Heart left ventricle (tissue), 16 donors: ENCODE measurements at regions of chr6 and their contacts with region 1.

Region 1: DNA sequence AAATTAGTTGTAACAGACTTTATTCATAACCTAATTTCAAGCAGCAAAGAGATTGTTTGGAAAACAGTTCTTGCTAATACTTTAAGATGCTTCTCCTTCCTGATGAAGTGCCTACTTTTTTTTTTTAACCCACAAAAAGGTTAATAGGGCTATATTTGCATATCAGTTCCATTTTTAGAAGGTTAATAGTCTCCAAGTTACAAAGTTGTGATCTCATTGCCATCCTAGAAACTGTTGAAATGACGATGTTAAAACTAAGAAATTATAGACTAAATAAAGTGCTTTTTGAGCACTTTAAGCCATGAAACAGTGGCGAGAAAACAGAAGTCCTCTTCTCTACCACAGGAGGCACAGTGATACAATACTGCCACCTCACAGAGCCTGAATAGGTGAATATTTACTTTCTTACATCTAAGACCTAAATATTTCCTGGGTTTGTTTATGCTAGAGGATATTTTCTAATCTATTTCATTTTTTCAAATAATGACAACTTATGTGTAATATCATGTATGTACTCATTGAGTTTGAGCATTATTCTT is 5.3 kb downstream of the RNF144B start:
- DNase-seq: no peak
- ATAC-seq: no peak
- H3K4me3 ChIP-seq: no peak overlapping the region
- H3K27ac ChIP-seq: no peak overlapping the region
- H3K4me1 ChIP-seq: peaks cover 0 to 67% (median 7%) of the 10 kb centered on the region in 12 donors
- H3K27me3 ChIP-seq: no peaks in the 10 kb centered on the region
- CTCF ChIP-seq: no peak
- POLR2A ChIP-seq: no peak

Region 2: GRCh38 chr6:18447552-18447951 is 55.1 kb after region 1 on chr6:
- intact Hi-C with region 1: loop called in 1 of 10 experiments (anchors 5 kb)
- DNase-seq: no peak
- ATAC-seq: no peak
- H3K4me3 ChIP-seq: no peak overlapping the region
- H3K27ac ChIP-seq: no peak overlapping the region
- H3K4me1 ChIP-seq: peaks cover 0 to 50% (median 11%) of the 10 kb centered on the region in 12 donors
- H3K27me3 ChIP-seq: no peaks in the 10 kb centered on the region
- CTCF ChIP-seq: no peak
- POLR2A ChIP-seq: no peak